PC-3 (cell line): ENCODE measurements at regions of chr6 and their contacts with region 1.

Region 1: GRCh38 chr6:2841264-2842138 is at the start of gene SERPINB1:
- DNase-seq: peak; percentile 83
- ATAC-seq: peak; percentile 61
- H3K4me3 ChIP-seq: peak within 1 kb of the TSS; percentile 81
- H3K27ac ChIP-seq: peak within 1 kb of the TSS; percentile 94
- H3K4me1 ChIP-seq: peaks cover 61% of the 10 kb centered on the region
- H3K27me3 ChIP-seq: no peaks in the 10 kb centered on the region
- CTCF ChIP-seq: 0 out of 2 replicates have a peak, but pooled peaks have one; percentile 8
- total RNA-seq, gene SERPINB1: 78.7 and 133 TPM in 2 replicates

Region 2: DNA sequence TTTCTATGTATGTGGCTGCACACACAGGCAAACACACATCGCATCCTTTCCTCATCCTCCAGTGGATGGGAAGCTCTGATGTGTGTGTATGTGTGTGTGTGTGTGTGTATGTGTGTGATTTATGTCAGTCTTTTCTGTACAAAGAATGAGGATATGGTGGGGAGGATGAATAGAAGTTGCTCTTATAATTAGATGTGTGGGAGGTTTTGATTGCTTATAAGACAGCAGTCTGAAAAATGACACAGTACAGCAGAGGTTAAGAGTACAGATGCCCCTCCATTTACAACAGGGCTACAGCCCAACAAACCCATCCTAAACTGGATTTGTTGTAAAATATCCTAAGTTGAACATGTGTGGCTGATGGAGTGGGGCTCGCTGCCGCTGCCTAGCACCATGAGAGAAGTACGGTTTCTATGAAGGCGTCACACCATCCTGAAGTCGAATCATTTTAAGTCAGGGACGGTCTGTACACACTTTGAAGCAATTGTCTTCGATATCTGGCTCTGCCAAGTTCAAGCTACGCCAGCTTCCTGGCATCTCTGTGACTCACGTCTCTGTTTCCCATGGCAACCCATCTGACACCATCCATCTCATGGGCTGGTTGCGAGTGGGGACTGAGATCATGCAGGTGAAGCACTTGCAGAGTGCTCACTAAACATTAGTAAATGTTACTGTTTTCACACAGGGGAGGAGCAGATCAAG is 343.4 kb before region 1 on chr6:
- CTCF ChIA-PET with region 1: no interaction called
- POLR2A ChIA-PET with region 1: no interaction called
- intact Hi-C with region 1: no loop called
- DNase-seq: peak; percentile 65
- ATAC-seq: peak; percentile 46; the same call in 1 of the 2 replicates
- H3K4me3 ChIP-seq: no peak overlapping the region
- H3K27ac ChIP-seq: no peak overlapping the region
- H3K4me1 ChIP-seq: peaks cover 32% of the 10 kb centered on the region
- H3K27me3 ChIP-seq: no peaks in the 10 kb centered on the region
- CTCF ChIP-seq: no peak

Region 3: GRCh38 chr6:2749969-2750600 is 91.4 kb before region 1 on chr6:
- CTCF ChIA-PET with region 1: no interaction called
- POLR2A ChIA-PET with region 1: no interaction called
- intact Hi-C with region 1: no loop called
- DNase-seq: peak; percentile 83
- ATAC-seq: peak; percentile 76
- H3K4me3 ChIP-seq: peak overlapping the region; percentile 11; the same call in 1 of the 2 replicates
- H3K27ac ChIP-seq: no peak overlapping the region
- H3K4me1 ChIP-seq: peaks cover 16% of the 10 kb centered on the region
- H3K27me3 ChIP-seq: no peaks in the 10 kb centered on the region
- CTCF ChIP-seq: peak; percentile 91

Region 4: GRCh38 chr6:2810092-2810671 is 31.3 kb before region 1 on chr6:
- CTCF ChIA-PET with region 1: no interaction called
- POLR2A ChIA-PET with region 1: interaction called, 28 read pairs
- intact Hi-C with region 1: loop called (anchors 1 kb)
- DNase-seq: peak; percentile 98
- ATAC-seq: peak; percentile 94
- H3K4me3 ChIP-seq: no peak overlapping the region
- H3K27ac ChIP-seq: peak overlapping the region; percentile 98
- H3K4me1 ChIP-seq: peaks cover 40% of the 10 kb centered on the region
- H3K27me3 ChIP-seq: no peaks in the 10 kb centered on the region
- CTCF ChIP-seq: no peak

Region 5: GRCh38 chr6:2818593-2818992 is 22.9 kb before region 1 on chr6:
- CTCF ChIA-PET with region 1: interaction called, 3 read pairs
- POLR2A ChIA-PET with region 1: interaction called, 25 read pairs
- intact Hi-C with region 1: loop called (anchors 1 kb)
- DNase-seq: peak; percentile 58
- ATAC-seq: peak; percentile 16
- H3K4me3 ChIP-seq: peak overlapping the region; percentile 56
- H3K27ac ChIP-seq: peak overlapping the region; percentile 99
- H3K4me1 ChIP-seq: peaks cover 62% of the 10 kb centered on the region
- H3K27me3 ChIP-seq: no peaks in the 10 kb centered on the region
- CTCF ChIP-seq: no peak